ENCODE measurements at regions of chr22 and their contacts with region 1.

Region 1: DNA sequence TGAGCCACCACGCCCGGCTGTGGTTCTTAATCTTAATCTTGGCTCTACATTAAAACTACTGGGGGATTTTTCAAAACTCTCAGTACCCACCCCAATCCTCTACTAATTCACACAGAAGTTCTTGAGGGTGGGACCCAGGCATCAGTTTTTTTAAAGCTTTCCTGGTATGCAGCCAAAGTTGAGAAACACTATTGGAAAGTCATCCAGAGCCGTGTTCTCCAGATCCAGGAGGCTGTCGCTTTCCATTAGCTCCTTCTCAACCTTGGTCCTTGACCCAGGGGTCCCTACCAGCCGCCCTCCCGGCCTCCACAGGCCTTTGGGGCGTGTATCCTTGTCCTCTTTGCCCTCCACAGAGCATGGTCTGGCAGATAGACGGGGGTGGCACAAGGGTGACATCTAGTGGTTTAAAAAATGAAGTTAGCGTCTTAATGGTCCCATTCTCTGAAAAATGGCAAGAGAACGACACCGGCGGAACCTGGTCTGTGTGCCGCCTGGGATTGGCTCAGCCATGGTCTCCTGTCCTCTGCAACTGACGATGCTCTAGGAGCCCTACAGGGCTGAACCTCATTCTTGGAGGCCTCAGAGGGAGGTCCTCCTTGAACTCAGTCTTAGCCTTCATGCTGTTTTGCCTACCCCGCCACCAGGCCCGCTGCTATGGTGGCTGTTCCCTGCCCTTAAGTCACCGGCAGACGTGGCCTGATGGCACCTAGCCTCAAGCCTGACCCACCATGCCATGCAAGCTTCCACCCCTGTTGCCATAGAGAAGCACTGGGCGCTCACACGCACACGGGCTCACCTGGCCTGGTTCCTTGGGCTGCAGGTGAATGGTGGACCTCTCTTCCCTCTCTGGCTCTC is 152.0 kb upstream of the SYN3 start:
- DNase-seq: peak in 1 of 2 donors; percentile 8
- ATAC-seq: peak in 6 of 8 donors; percentile 47 to 74 (median 56)
- H3K4me3 ChIP-seq: no peak overlapping the region
- H3K27ac ChIP-seq: no peak overlapping the region
- H3K4me1 ChIP-seq: no peaks in the 10 kb centered on the region
- H3K27me3 ChIP-seq: peaks cover 0 to 26% (median 4%) of the 10 kb centered on the region in 7 donors
- CTCF ChIP-seq: peak in 7 of 9 donors; percentile 49 to 64 (median 59)

Region 2: GRCh38 chr22:32655068-32655467 is 555.1 kb before region 1 on chr22:
- intact Hi-C with region 1: loop called in 1 of 10 experiments (anchors 5 kb)
- DNase-seq: no peak
- ATAC-seq: no peak
- H3K4me3 ChIP-seq: no peak overlapping the region
- H3K27ac ChIP-seq: no peak overlapping the region
- H3K4me1 ChIP-seq: peaks cover 0 to 7% (median 1%) of the 10 kb centered on the region in 9 donors
- H3K27me3 ChIP-seq: no peaks in the 10 kb centered on the region
- CTCF ChIP-seq: no peak

Region 3: DNA sequence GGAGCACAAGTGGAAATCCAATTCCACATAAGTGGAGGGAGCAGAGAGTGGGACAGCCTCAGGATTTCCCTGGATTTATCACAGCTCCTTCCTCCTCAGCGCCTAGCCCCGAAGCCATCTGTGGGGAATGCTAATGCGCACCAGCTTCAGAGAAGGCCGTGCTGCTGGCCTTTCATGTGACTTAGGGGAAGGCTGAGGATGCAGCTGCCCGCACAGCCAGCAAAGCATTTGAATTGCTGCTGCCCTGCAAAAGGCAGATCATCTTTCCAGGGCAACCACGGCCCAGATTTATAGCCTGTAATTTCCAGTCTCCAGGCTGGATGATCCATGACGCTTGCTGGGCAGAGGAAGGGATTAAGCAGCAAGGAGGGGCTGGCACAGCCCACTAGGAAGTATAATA is 181.9 kb before region 1 on chr22:
- intact Hi-C with region 1: loop called in 1 of 10 experiments (anchors 10 kb)
- DNase-seq: no peak
- ATAC-seq: no peak
- H3K4me3 ChIP-seq: no peak overlapping the region
- H3K27ac ChIP-seq: no peak overlapping the region
- H3K4me1 ChIP-seq: no peaks in the 10 kb centered on the region
- H3K27me3 ChIP-seq: peaks cover 0 to 41% (median 14%) of the 10 kb centered on the region in 7 donors
- CTCF ChIP-seq: no peak

Region 4: DNA sequence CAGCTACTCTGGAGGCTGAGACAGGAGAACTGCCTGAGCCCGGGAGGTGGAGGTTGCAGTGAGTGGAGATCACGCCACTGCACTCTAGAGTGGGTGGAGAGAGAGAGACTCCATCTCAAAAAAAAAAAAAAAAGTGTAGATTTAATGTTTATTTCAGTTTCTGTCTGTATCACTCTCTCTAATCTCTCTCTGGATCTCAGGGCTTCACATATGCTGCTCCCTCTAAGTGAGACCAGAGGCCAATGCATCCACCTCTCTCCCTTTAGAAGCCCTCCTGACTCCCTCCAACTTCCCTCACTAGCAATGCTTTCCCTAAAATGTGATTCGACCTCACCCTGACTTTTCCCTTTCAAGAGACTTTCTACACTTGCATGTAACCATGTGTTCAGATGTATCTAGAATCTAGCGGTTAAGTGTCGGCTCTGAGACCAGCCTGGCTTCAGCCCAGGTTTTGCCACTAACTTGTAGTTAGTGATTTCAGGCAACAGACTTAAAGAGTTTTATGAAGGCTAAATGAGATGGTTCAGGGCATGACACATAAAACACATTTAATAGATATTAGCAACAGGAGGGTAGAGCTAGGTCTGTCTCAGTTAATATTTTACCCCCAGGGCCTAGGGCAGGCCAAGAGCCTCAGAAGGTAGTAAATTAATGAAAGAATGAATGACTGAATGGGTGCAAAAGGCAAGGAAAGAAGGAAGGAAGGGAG is 345.8 kb after region 1 on chr22:
- intact Hi-C with region 1: no loop called
- DNase-seq: no peak
- ATAC-seq: no peak
- H3K4me3 ChIP-seq: no peak overlapping the region
- H3K27ac ChIP-seq: no peak overlapping the region
- H3K4me1 ChIP-seq: peaks cover 0 to 11% (median 0%) of the 10 kb centered on the region in 9 donors
- H3K27me3 ChIP-seq: no peaks in the 10 kb centered on the region
- CTCF ChIP-seq: no peak

Measured in heart right ventricle (tissue), 16 donors.